AG04450 (cell line): ENCODE measurements at regions of chr22 and their contacts with region 1.

Region 1: DNA sequence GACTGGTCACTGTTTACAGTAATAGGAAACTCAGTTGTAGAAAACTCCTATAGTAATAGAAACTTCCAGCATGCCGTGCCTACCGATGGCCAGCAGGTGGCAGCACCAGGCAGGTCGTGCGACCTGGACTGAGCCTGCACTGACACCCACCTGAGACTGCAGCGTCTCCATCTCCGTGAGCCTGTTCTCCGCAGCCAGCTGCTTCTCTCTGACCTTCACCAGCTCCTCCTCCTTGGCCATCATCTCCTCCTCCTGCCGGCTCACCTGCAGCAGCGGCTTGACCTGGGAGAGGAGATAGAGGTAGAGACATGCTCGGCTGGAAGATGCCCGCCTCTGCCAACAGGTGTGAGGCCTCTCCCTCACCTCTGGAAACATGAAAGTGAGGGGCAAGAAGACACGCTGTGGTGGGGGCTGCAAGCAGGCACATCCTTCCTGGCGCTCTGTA is 48.5 kb downstream of the APOL1 start:
- DNase-seq: peak; percentile 33
- H3K4me3 ChIP-seq: peak overlapping the region; percentile 18
- H3K27ac ChIP-seq: peak overlapping the region; percentile 99
- H3K27me3 ChIP-seq: no peaks in the 10 kb centered on the region
- CTCF ChIP-seq: peak; percentile 91

Region 2: DNA sequence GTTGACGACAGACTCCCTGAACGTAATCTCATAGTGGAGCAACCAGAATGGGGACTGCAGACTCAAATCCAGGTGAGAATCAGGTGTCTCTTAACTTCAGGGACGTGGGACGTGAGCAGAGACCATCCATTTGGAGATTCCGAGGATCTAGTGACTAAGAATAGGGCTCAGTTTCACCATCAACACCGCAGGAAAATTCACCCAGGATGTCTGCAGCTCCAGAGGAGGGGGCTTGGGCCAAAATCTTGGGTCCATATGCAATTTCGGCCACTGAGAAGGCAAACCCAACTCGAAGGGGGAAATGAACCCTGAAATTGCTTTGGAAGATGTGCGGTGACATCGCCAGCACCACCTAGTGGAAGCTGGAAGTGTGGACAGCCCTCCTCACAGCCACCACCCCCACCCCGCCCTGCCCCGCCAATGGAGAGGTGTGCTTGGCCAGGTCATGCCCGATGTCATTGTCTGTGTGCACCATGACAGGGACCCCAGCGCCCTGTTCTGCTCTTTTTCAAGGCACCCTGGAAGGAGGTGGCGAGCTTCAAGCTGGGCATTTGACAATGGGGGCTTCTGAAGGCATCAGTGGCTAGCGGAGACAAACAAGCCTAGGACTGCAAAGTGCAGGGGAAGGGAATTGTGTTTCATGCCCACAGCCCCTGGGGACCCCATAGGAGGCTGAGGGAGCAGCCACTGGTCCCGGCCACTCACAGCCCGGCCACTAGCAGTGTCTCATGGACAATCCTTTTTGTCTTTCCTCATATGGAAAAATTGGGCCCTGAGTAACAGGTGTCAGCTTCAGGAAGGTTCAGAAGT is 23.7 kb before region 1 on chr22:
- CTCF ChIA-PET with region 1: interaction called, 10 read pairs
- POLR2A ChIA-PET with region 1: no interaction called
- DNase-seq: peak; percentile 29
- H3K4me3 ChIP-seq: no peak overlapping the region
- H3K27ac ChIP-seq: peak overlapping the region; percentile 31
- H3K27me3 ChIP-seq: no peaks in the 10 kb centered on the region
- CTCF ChIP-seq: peak; percentile 73

Region 3: DNA sequence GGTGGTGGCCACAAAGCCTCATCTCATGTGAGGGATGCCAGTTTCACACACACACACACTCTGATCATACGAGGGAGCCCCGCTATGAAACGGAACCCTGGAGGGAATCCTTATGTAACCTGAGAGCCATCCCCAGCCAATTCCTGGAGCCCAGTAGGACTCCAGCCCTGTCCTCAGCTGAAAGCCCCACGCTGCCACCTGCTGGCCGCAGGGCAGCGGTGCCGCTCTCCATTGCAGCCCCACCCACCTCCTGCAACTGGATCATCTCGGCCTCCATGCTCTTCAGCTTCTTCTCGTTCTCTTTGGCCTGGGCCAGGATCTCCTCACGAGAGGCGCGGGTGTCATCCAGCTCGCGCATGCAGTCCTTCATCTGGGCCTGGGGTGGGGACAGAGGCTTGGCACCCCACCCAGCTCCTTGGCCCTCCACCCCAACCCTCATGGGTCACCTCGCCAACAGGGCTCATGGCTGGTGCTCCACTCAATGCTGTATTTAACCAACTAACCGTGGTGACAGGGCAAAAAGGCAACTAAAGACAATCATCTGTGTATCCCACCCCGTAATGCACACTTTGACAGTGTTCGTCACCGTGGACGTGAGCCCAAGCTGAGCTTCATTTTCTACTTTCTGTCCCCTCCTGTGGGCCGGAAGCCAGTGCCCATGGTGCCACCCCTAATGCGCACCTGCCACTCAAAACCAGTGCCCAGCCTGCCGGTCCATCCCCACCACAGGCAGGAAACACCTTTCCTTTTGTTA is 14.8 kb before region 1 on chr22:
- CTCF ChIA-PET with region 1: interaction called, 33 read pairs
- POLR2A ChIA-PET with region 1: interaction called, 6 read pairs
- DNase-seq: peak; percentile 56
- H3K4me3 ChIP-seq: no peak overlapping the region
- H3K27ac ChIP-seq: peak overlapping the region; percentile 52
- H3K27me3 ChIP-seq: no peaks in the 10 kb centered on the region
- CTCF ChIP-seq: peak; percentile 94

Region 4: DNA sequence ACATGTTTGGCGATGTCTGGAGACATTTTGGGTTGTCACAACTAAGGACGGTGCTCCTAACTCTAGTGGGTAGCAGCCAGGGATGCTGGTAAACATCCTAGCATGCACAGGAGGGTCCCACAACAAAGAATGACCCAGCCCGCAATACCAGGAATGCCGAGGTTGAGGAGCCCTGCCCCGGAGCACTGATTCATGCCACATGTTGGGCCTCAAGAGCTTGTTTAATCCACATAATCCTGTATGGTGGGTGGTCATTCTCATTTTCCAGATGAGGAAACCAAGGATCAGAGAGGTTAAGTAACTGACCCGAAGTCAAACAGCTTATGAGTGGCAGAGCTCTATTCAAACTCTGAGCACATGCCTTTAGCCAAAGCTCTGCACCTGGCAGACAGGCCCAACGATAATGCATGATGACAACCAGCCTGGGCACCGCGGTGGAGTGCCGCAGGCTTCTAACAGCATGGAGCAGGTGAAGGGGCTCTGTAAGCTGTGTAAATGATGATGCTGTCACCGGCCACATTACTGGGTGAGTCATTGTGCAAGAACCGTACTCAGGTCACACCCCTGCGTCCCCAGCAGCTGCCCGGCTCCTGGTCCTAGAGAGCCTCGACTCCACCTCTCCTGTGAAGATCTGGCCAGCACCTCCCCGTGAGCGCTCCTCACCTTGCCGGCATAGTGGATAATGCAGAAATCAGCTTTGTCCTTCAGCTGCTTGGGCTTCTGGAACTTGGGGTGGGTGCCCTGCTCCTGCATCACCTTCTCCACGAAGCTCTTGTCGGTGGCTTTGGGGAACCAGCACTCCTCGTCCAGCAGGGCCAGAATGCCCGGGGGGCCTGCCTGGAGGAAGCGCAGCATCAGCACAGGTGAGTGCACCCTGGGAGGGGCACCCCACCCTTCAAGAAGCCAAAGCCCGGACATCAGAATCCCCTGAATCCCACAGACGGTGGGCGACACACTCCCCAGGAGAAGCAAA is 10.3 kb after region 1 on chr22:
- CTCF ChIA-PET with region 1: interaction called, 10 read pairs
- POLR2A ChIA-PET with region 1: interaction called, 6 read pairs
- DNase-seq: no peak
- H3K4me3 ChIP-seq: no peak overlapping the region
- H3K27ac ChIP-seq: peak overlapping the region; percentile 31
- H3K27me3 ChIP-seq: no peaks in the 10 kb centered on the region
- CTCF ChIP-seq: no peak